ENCODE measurements at regions of chr19 and their contacts with region 1.

Region 1: DNA sequence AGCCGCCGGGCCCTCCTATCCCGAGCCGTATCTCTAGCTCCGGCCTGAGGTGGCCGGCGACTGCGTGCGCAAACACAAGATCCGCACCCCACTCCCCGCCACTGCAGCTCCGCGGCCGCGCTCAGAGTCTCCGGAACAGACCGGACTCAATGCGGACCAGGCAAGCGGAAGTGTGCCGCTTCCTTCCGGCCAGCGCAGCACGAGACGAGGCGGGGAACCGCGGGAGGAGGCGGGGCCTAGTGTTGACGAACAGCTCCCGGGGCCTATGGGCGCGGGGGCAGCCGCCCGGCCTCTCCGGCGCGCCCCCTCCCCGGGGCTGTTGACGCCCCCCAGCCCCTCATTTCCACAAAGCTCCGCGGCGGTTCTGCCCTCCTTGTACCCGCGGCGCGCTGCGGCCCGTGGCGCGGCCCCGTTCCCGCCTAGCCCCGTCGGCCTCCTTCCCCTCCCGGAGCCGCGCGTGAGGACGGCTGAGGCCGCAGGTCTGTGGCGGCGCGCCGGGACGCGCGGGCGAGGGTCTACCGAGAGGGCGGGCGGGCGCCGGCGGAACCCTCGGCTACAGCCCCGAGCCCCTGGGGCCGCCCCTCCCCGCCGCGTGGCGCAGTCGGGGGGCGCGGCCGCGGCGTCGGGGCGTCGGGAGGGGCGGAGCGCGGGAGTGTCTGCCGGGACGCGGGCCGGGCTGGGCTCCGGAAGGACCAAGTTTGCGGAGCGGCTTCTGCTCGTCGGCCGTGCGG is at the start of gene DPY19L3:
- DNase-seq: peak; percentile 89
- H3K4me3 Mint-ChIP-seq: peak within 1 kb of the TSS; percentile 90
- H3K27ac Mint-ChIP-seq: peak within 1 kb of the TSS; percentile 88
- H3K4me1 Mint-ChIP-seq: peaks cover 17% of the 10 kb centered on the region
- H3K27me3 Mint-ChIP-seq: peaks cover 5% of the 10 kb centered on the region
- total RNA-seq, gene DPY19L3: 11.9 and 16.5 TPM in 2 replicates

Region 2: DNA sequence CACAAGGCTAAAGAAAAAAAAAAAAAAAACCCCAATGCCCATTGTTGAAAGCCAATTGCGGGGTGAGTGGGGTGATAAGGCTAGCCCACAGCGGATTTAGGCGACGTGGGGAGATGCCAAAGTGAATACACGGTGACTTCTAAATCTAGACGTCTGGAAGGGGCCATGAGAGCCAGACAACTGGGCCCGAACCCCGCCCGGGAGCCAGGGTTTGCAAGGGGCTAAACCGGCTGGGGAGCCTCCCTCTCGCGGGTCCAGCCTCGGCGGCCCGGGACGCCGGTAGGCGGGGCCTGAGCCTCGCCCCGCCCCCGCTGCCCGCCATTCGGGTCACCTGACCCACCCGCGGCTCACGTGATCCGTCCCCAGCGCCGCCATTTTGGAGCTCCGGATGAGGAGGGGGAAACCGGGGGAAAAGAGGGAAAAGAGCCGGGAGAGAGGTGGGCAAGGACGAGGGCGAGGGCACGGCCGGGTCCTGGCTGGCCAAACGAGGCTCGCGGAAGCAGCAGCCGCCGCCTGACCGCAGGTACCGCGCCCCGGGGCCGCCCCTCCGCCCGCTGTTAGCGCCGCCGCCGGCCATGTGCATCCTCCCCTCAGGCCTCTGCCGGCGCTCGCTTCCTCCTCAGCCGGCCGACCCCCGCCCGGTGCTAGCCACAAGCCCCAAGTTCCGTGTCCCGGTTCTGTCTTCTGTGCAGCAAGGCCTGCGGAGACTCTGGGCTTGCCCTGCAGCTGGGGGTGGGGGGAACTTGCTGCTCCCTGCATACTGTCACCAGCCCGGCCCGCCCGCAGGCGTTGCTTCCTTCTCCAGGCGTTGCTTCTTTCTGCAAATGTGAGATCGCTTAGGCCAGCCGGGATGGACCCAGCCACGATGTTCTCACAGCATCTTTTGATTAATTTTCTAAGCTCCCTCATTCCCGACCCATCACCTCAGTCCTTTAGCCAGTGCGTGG is 60.1 kb before region 1 on chr19 and contains the start of gene ZNF507:
- intact Hi-C with region 1: loop called (anchors 1 kb)
- DNase-seq: peak; percentile 82
- H3K4me3 Mint-ChIP-seq: peak within 1 kb of the TSS; percentile 96
- H3K27ac Mint-ChIP-seq: peak within 1 kb of the TSS; percentile 96
- H3K4me1 Mint-ChIP-seq: peaks cover 40% of the 10 kb centered on the region
- H3K27me3 Mint-ChIP-seq: peaks cover 7% of the 10 kb centered on the region
- total RNA-seq, gene ZNF507: 32.4 and 34.8 TPM in 2 replicates

Region 3: GRCh38 chr19:32489971-32490370 is 84.4 kb after region 1 on chr19:
- intact Hi-C with region 1: no loop called
- DNase-seq: no peak
- H3K4me3 Mint-ChIP-seq: no peak overlapping the region
- H3K27ac Mint-ChIP-seq: no peak overlapping the region
- H3K4me1 Mint-ChIP-seq: no peaks in the 10 kb centered on the region
- H3K27me3 Mint-ChIP-seq: peaks cover 2% of the 10 kb centered on the region